Endothelial cell of umbilical vein (primary cell): ENCODE measurements at regions of chr6 and their contacts with region 1.

Region 1: GRCh38 chr6:85323435-85324040 is 126.3 kb upstream of the NT5E start:
- DNase-seq: peak; percentile 80
- H3K4me3 ChIP-seq: no peak overlapping the region
- H3K27ac ChIP-seq: no peak overlapping the region
- H3K4me1 ChIP-seq: no peaks in the 10 kb centered on the region
- H3K27me3 ChIP-seq: peaks cover 3 to 4% of the 10 kb centered on the region in 2 experiments
- CTCF ChIP-seq: peak; percentile 74 to 83
- POLR2A ChIP-seq: no peak

Region 2: GRCh38 chr6:84227434-84228197 is 1095.9 kb before region 1 on chr6 and contains the start of gene CEP162:
- CTCF ChIA-PET with region 1: interaction called, 9 read pairs
- POLR2A ChIA-PET with region 1: no interaction called
- dilution Hi-C with region 1: no loop called
- intact Hi-C with region 1: loop called (anchors 1 kb)
- DNase-seq: peak; percentile 95
- H3K4me3 ChIP-seq: peak within 1 kb of the TSS; percentile 57 to 74 (median 67)
- H3K27ac ChIP-seq: peak within 1 kb of the TSS; percentile 14
- H3K4me1 ChIP-seq: peaks cover 7% of the 10 kb centered on the region
- H3K27me3 ChIP-seq: peaks cover 11 to 24% of the 10 kb centered on the region in 2 experiments
- CTCF ChIP-seq: peak; percentile 55 to 62
- POLR2A ChIP-seq: peak; percentile 20
- total RNA-seq, gene CEP162: 8.8 and 10.8 TPM in 2 replicates

Region 3: GRCh38 chr6:84284428-84285049 is 1039.0 kb before region 1 on chr6:
- CTCF ChIA-PET with region 1: interaction called, 22 read pairs
- POLR2A ChIA-PET with region 1: no interaction called
- dilution Hi-C with region 1: no loop called
- intact Hi-C with region 1: loop called (anchors 1 kb)
- DNase-seq: peak; percentile 41
- H3K4me3 ChIP-seq: no peak overlapping the region
- H3K27ac ChIP-seq: no peak overlapping the region
- H3K4me1 ChIP-seq: no peaks in the 10 kb centered on the region
- H3K27me3 ChIP-seq: peaks cover 6 to 13% of the 10 kb centered on the region in 2 experiments
- CTCF ChIP-seq: peak; percentile 37 to 53
- POLR2A ChIP-seq: no peak

Region 4: GRCh38 chr6:84774157-84774984 is 549.2 kb before region 1 on chr6:
- CTCF ChIA-PET with region 1: interaction called, 14 read pairs
- POLR2A ChIA-PET with region 1: no interaction called
- dilution Hi-C with region 1: no loop called
- intact Hi-C with region 1: no loop called
- DNase-seq: peak; percentile 79
- H3K4me3 ChIP-seq: peak overlapping the region; percentile 52 to 55 (median 54)
- H3K27ac ChIP-seq: no peak overlapping the region
- H3K4me1 ChIP-seq: peaks cover 15% of the 10 kb centered on the region
- H3K27me3 ChIP-seq: peaks cover 30 to 76% of the 10 kb centered on the region in 2 experiments
- CTCF ChIP-seq: peak; percentile 79 to 85
- POLR2A ChIP-seq: peak; percentile 35

Region 5: GRCh38 chr6:85015396-85015990 is 308.0 kb before region 1 on chr6:
- CTCF ChIA-PET with region 1: interaction called, 5 read pairs
- POLR2A ChIA-PET with region 1: no interaction called
- dilution Hi-C with region 1: no loop called
- intact Hi-C with region 1: loop called (anchors 2 kb)
- DNase-seq: peak; percentile 83
- H3K4me3 ChIP-seq: no peak overlapping the region
- H3K27ac ChIP-seq: no peak overlapping the region
- H3K4me1 ChIP-seq: no peaks in the 10 kb centered on the region
- H3K27me3 ChIP-seq: peaks cover 9% of the 10 kb centered on the region in 2 experiments
- CTCF ChIP-seq: peak; percentile 80 to 82
- POLR2A ChIP-seq: no peak

Region 6: GRCh38 chr6:85344996-85345395 is 21.5 kb after region 1 on chr6:
- CTCF ChIA-PET with region 1: interaction called, 15 read pairs
- POLR2A ChIA-PET with region 1: no interaction called
- dilution Hi-C with region 1: no loop called
- intact Hi-C with region 1: no loop called
- DNase-seq: no peak
- H3K4me3 ChIP-seq: no peak overlapping the region
- H3K27ac ChIP-seq: no peak overlapping the region
- H3K4me1 ChIP-seq: no peaks in the 10 kb centered on the region
- H3K27me3 ChIP-seq: peaks cover 6 to 8% of the 10 kb centered on the region in 2 experiments
- CTCF ChIP-seq: no peak
- POLR2A ChIP-seq: no peak